Activated B cell treated with CpG ODN at 0.5 μM for 24 hours (primary cell): ENCODE measurements at regions of chr13 and their contacts with region 1.

Region 1: DNA sequence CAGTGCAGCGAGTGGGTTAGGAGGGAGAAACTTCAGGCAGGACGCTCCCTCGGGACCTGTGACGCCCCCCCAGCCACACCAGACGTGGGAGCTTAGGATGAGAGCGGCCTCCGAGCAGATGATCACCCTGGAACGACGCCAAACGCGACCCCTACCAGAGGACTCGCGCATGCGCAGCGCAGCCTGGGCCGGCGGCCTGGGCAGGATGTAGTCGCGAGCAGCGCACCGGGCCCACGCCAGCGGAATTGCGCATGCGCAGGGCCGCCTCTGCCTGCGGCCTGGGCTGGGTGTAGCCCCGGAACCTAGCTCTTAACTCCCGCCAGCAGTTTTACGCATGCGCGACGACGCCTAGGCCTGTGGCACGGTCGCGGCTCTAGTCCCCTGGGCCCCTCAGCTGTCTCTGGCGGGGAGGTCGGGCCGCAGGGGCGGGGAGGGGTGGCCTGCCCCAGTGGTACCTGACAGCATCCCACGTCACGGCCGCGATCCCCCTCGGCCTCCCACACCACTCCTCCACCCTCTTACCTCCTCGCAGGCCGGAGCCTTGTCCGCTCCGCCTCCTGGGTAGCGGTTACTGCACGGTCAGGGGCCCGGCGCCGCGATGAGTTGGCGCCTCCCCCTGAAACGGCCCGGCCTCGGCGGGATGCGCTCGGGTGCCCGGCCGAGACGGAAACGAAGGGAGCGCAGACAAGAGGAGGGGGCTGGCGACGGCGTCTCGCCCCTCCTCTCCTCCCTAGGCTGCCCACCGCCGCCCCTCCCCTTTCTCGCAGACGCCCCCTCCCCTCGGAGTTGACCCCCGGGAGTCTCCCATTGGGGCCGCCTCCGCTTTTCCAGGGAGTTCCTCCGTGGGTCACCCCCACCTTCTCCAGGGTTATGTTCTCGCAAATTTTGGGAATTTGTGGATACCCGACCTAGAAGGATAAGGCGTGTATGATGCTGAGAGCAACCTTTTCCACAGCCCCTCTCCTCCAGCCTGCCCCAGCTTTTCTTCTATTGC is at the start of gene RCBTB2:
- DNase-seq: peak; percentile 98
- ATAC-seq: peak; percentile 94
- H3K4me3 Mint-ChIP-seq: peak within 1 kb of the TSS; percentile 95
- H3K27ac Mint-ChIP-seq: peak within 1 kb of the TSS; percentile 94
- H3K4me1 Mint-ChIP-seq: peaks cover 20% of the 10 kb centered on the region
- H3K27me3 Mint-ChIP-seq: peaks cover 12% of the 10 kb centered on the region
- CTCF ChIP-seq: no peak
- total RNA-seq, gene RCBTB2: 2.3 and 2.4 TPM in 2 replicates

Region 2: DNA sequence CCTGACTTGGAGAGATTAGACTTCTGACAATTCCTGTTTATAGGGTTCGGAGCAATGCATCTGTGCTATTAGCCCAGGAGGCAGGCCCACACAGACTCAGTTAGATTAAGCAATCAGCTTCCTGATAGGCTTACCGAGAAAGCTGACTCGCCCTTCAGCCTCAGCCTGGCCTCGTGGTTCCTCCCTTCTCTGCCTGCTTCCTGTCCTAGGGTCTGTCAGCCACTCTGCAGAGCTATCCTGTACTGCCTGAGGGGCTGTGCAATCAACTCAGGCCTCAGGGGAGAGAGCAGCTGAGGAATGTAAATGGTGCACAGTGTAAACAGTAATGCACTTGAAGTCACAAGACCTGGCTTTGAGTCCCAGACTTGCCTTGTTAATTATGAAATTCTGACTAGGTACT is 1666.7 kb before region 1 on chr13:
- CTCF ChIA-PET with region 1: no interaction called
- POLR2A ChIA-PET with region 1: no interaction called
- intact Hi-C with region 1: no loop called
- DNase-seq: no peak
- ATAC-seq: no peak
- H3K4me3 Mint-ChIP-seq: no peak overlapping the region
- H3K27ac Mint-ChIP-seq: no peak overlapping the region
- H3K4me1 Mint-ChIP-seq: no peaks in the 10 kb centered on the region
- H3K27me3 Mint-ChIP-seq: peaks cover 7% of the 10 kb centered on the region
- CTCF ChIP-seq: no peak

Region 3: GRCh38 chr13:48037346-48038173 is 495.2 kb before region 1 on chr13 and contains the start of gene NUDT15:
- CTCF ChIA-PET with region 1: no interaction called
- POLR2A ChIA-PET with region 1: no interaction called
- intact Hi-C with region 1: loop called (anchors 1 kb)
- DNase-seq: peak; percentile 92
- ATAC-seq: peak; percentile 94
- H3K4me3 Mint-ChIP-seq: peak within 1 kb of the TSS; percentile 93
- H3K27ac Mint-ChIP-seq: peak within 1 kb of the TSS; percentile 96
- H3K4me1 Mint-ChIP-seq: peaks cover 29% of the 10 kb centered on the region
- H3K27me3 Mint-ChIP-seq: no peaks in the 10 kb centered on the region
- CTCF ChIP-seq: peak; percentile 83
- total RNA-seq, gene NUDT15: 5.5 and 6.2 TPM in 2 replicates

Region 4: GRCh38 chr13:48094781-48095502 is 437.9 kb before region 1 on chr13 and contains the start of gene MED4:
- CTCF ChIA-PET with region 1: interaction called, 3 read pairs
- POLR2A ChIA-PET with region 1: no interaction called
- intact Hi-C with region 1: loop called (anchors 2 kb)
- DNase-seq: peak; percentile 99
- ATAC-seq: peak; percentile 99
- H3K4me3 Mint-ChIP-seq: peak within 1 kb of the TSS; percentile 96
- H3K27ac Mint-ChIP-seq: peak within 1 kb of the TSS; percentile 90
- H3K4me1 Mint-ChIP-seq: peaks cover 34% of the 10 kb centered on the region
- H3K27me3 Mint-ChIP-seq: peaks cover 5% of the 10 kb centered on the region
- CTCF ChIP-seq: peak; percentile 84
- total RNA-seq, gene MED4: 50.4 and 51.9 TPM in 2 replicates

Region 5: GRCh38 chr13:48492470-48493065 is 40.2 kb before region 1 on chr13:
- CTCF ChIA-PET with region 1: interaction called, 3 read pairs
- POLR2A ChIA-PET with region 1: interaction called, 14 read pairs
- intact Hi-C with region 1: loop called (anchors 1 kb)
- DNase-seq: peak; percentile 60
- ATAC-seq: peak; percentile 89
- H3K4me3 Mint-ChIP-seq: no peak overlapping the region
- H3K27ac Mint-ChIP-seq: no peak overlapping the region
- H3K4me1 Mint-ChIP-seq: peaks cover 34% of the 10 kb centered on the region
- H3K27me3 Mint-ChIP-seq: no peaks in the 10 kb centered on the region
- CTCF ChIP-seq: no peak

Region 6: GRCh38 chr13:48505597-48506091 is 27.2 kb before region 1 on chr13:
- CTCF ChIA-PET with region 1: interaction called, 4 read pairs
- POLR2A ChIA-PET with region 1: interaction called, 11 read pairs
- intact Hi-C with region 1: loop called (anchors 1 kb)
- DNase-seq: no peak
- ATAC-seq: peak; percentile 85
- H3K4me3 Mint-ChIP-seq: peak overlapping the region; percentile 75
- H3K27ac Mint-ChIP-seq: peak overlapping the region; percentile 59
- H3K4me1 Mint-ChIP-seq: peaks cover 55% of the 10 kb centered on the region
- H3K27me3 Mint-ChIP-seq: peaks cover 20% of the 10 kb centered on the region
- CTCF ChIP-seq: no peak

Region 7: GRCh38 chr13:48562296-48563066 is 29.7 kb after region 1 on chr13:
- CTCF ChIA-PET with region 1: no interaction called
- POLR2A ChIA-PET with region 1: interaction called, 8 read pairs
- intact Hi-C with region 1: loop called (anchors 1 kb)
- DNase-seq: no peak
- ATAC-seq: peak; percentile 99
- H3K4me3 Mint-ChIP-seq: no peak overlapping the region
- H3K27ac Mint-ChIP-seq: peak overlapping the region; percentile 57
- H3K4me1 Mint-ChIP-seq: peaks cover 24% of the 10 kb centered on the region
- H3K27me3 Mint-ChIP-seq: peaks cover 59% of the 10 kb centered on the region
- CTCF ChIP-seq: no peak

Region 8: GRCh38 chr13:48828962-48829421 is 296.2 kb after region 1 on chr13:
- CTCF ChIA-PET with region 1: no interaction called
- POLR2A ChIA-PET with region 1: no interaction called
- intact Hi-C with region 1: loop called (anchors 1 kb)
- DNase-seq: no peak
- ATAC-seq: peak; percentile 82
- H3K4me3 Mint-ChIP-seq: peak overlapping the region; percentile 59
- H3K27ac Mint-ChIP-seq: peak overlapping the region; percentile 78
- H3K4me1 Mint-ChIP-seq: peaks cover 32% of the 10 kb centered on the region
- H3K27me3 Mint-ChIP-seq: no peaks in the 10 kb centered on the region
- CTCF ChIP-seq: no peak

Region 9: DNA sequence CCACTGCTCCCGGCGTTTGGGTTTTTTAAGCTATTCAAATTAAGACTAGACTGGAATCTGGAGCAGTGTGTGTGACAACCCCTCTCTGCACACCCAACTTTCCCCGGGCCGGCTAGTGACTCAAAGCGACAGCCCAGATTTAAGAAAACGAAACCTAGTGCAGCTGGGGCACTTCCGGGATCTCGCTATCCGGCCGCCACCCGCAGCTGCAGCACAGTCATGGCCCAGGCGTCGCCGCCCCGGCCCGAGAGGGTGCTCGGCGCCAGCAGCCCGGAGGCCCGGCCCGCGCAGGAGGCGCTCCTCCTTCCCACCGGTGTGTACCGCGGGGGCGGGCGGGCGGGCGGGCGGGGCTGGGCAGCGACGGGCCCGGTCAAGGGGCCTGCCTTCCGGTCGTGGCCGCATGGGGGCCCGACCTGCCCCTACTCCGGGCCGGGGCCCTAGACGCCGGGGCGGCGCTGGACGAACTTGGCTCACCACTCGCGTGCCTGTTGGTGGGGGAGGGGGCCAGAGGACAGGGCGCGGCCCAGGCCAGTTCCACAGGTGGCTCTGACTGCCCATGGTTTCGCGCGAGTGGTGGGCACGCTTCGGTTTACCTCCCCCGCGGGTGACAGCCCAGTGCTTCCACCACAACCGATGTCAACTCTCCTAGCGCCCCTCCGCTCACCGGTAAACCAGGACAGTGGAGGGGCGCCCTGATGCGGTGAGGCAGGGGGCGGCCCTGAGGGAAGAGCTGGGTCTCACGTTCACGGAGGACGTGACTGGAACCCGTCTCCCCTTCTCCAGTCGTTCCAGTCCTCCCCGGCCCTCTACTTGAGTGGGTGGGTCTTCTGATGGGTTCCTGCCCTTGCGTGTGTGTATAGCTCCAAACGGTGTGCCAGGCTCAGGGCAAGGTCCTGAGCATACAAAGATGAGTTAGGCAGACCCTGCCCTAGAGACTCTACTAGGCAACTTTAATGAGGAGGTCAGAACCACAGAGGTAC is 963.3 kb after region 1 on chr13 and contains the start of gene PHF11:
- CTCF ChIA-PET with region 1: no interaction called
- POLR2A ChIA-PET with region 1: no interaction called
- intact Hi-C with region 1: no loop called
- DNase-seq: peak; percentile 78
- ATAC-seq: peak; percentile 82
- H3K4me3 Mint-ChIP-seq: peak within 1 kb of the TSS; percentile 98
- H3K27ac Mint-ChIP-seq: peak within 1 kb of the TSS; percentile 100
- H3K4me1 Mint-ChIP-seq: peaks cover 44% of the 10 kb centered on the region
- H3K27me3 Mint-ChIP-seq: no peaks in the 10 kb centered on the region
- CTCF ChIP-seq: no peak
- total RNA-seq, gene PHF11: 128 and 148 TPM in 2 replicates